ENCODE measurements at regions of chr9 and their contacts with region 1.

Region 1: GRCh38 chr9:116661037-116661954 is 25.8 kb upstream of the TRIM32 start:
- DNase-seq: peak; percentile 39
- CTCF ChIP-seq: peak; percentile 41

Region 2: GRCh38 chr9:115615821-115616665 is 1045.3 kb before region 1 on chr9:
- in situ Hi-C with region 1: loop called (anchors 25 kb)
- DNase-seq: no peak
- CTCF ChIP-seq: no peak

Region 3: GRCh38 chr9:116149844-116150243 is 511.5 kb before region 1 on chr9:
- in situ Hi-C with region 1: loop called (anchors 25 kb)
- DNase-seq: peak; percentile 32
- CTCF ChIP-seq: peak; percentile 20

Region 4: DNA sequence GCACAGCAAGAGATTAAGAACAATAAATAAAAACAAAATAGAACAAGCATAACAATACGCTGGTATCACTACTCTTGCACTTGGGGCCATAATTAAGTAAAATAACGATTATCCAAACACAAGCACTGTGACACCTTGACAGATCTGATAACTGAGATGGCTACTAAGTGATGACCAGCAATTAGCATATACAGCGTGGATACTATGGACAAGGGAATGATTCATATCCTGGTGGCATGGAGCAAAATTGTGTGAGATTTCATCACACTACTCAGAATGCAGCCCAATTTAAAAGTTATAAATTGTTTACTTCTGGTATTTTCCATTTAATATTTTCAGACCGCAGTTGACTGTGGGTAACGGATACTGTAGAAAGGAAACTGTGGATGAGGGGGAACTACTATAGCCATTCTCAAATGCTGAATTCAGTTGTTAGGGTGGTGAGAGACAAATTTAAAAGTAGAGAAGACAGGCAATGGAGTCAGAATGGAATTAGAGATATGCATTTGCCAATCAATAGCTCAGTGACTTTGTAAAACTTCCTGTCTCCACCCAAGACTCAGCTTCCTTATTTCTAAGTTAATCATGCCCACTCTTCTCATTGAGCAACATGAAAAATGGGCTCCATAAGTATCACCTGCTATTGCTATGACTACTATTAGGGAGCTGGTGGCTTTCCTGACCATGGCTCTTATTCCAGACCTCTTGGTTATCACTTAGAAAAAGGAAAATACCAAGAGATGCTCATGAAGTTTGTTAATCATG is 326.6 kb after region 1 on chr9:
- in situ Hi-C with region 1: no loop called
- DNase-seq: no peak
- CTCF ChIP-seq: no peak